ENCODE measurements at regions of chr12 and their contacts with region 1.

Region 1: DNA sequence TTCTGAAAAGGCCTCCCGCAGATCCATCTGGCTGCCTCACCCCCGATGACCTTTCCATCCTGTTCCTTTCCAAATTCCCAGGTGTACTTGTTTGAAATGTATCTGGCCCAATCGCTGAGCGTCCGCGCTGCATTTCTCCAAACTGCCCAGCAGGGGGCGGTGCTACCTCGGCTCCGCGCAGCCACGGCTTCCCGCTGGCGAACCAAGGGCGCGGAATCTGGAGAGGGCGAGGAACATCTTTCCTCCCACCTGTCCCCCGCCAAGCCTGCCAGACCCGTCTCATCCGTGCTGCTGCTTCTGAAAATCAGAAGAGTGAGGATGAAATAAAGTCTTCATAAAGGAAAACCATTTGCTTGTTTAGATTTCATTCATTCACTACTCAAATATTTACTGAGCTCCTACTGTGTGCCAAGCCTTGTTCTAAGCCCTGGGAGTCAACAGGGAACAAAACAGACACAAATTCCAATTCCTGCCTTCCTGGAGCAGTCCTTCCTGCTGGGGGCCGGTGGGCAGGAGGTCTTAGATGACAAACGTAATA is 16.8 kb upstream of the MYL2 start:
- DNase-seq: peak; percentile 47 to 78
- H3K4me3 ChIP-seq: no peak overlapping the region
- H3K4me3 Mint-ChIP-seq: peak overlapping the region; percentile 55
- H3K27ac Mint-ChIP-seq: peak overlapping the region; percentile 31
- H3K4me1 ChIP-seq: peaks cover 19% of the 10 kb centered on the region
- H3K4me1 Mint-ChIP-seq: peaks cover 22% of the 10 kb centered on the region
- H3K27me3 ChIP-seq: no peaks in the 10 kb centered on the region
- H3K27me3 Mint-ChIP-seq: no peaks in the 10 kb centered on the region
- CTCF ChIP-seq: peak; percentile 81 to 96

Region 2: DNA sequence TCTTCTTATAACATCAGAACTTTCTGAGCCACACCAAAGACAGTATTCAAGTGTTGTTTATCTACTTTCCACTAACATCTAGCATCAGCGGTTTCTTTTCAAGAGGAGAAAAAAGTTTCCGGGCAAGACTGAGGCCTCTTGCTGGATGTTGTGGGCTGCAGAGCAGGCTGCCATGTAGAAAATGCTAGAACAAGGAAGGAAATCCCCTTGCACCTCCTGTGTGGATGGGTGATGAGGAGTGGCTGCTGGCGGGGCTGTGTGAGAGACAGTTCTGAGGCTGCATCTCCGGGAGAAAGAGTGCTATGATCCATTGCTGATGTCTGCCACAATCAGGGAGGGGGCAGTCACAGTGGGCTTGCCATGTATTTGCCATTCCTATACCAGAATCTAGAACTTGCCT is 156.7 kb before region 1 on chr12:
- CTCF ChIA-PET with region 1: no interaction called
- POLR2A ChIA-PET with region 1: no interaction called
- intact Hi-C with region 1: no loop called
- DNase-seq: no peak
- H3K4me3 ChIP-seq: no peak overlapping the region
- H3K4me3 Mint-ChIP-seq: no peak overlapping the region
- H3K27ac Mint-ChIP-seq: no peak overlapping the region
- H3K4me1 ChIP-seq: no peaks in the 10 kb centered on the region
- H3K4me1 Mint-ChIP-seq: no peaks in the 10 kb centered on the region
- H3K27me3 ChIP-seq: no peaks in the 10 kb centered on the region; the same call in 1 of the 2 replicates
- H3K27me3 Mint-ChIP-seq: peaks cover 11% of the 10 kb centered on the region
- CTCF ChIP-seq: no peak

Region 3: GRCh38 chr12:110901401-110901800 is 35.8 kb before region 1 on chr12:
- CTCF ChIA-PET with region 1: no interaction called
- POLR2A ChIA-PET with region 1: no interaction called
- intact Hi-C with region 1: loop called (anchors 1 kb)
- DNase-seq: peak; percentile 33 to 45
- H3K4me3 ChIP-seq: no peak overlapping the region
- H3K4me3 Mint-ChIP-seq: no peak overlapping the region
- H3K27ac Mint-ChIP-seq: no peak overlapping the region
- H3K4me1 ChIP-seq: peaks cover 12% of the 10 kb centered on the region
- H3K4me1 Mint-ChIP-seq: peaks cover 13% of the 10 kb centered on the region
- H3K27me3 ChIP-seq: no peaks in the 10 kb centered on the region
- H3K27me3 Mint-ChIP-seq: no peaks in the 10 kb centered on the region
- CTCF ChIP-seq: no peak

Region 4: GRCh38 chr12:111033281-111034082 is 96.3 kb after region 1 on chr12:
- CTCF ChIA-PET with region 1: no interaction called
- POLR2A ChIA-PET with region 1: no interaction called
- intact Hi-C with region 1: no loop called
- DNase-seq: no peak
- H3K4me3 ChIP-seq: no peak overlapping the region
- H3K4me3 Mint-ChIP-seq: no peak overlapping the region
- H3K27ac Mint-ChIP-seq: no peak overlapping the region
- H3K4me1 ChIP-seq: peaks cover 6% of the 10 kb centered on the region; the same call in 1 of the 2 replicates
- H3K4me1 Mint-ChIP-seq: peaks cover 15% of the 10 kb centered on the region
- H3K27me3 ChIP-seq: no peaks in the 10 kb centered on the region
- H3K27me3 Mint-ChIP-seq: peaks cover 26% of the 10 kb centered on the region
- CTCF ChIP-seq: no peak

Region 5: GRCh38 chr12:111298582-111299436 is 361.6 kb after region 1 on chr12:
- CTCF ChIA-PET with region 1: interaction called, 3 read pairs
- POLR2A ChIA-PET with region 1: no interaction called
- intact Hi-C with region 1: loop called (anchors 2 kb)
- DNase-seq: peak; percentile 55 to 72
- H3K4me3 ChIP-seq: no peak overlapping the region
- H3K4me3 Mint-ChIP-seq: no peak overlapping the region
- H3K27ac Mint-ChIP-seq: no peak overlapping the region
- H3K4me1 ChIP-seq: no peaks in the 10 kb centered on the region
- H3K4me1 Mint-ChIP-seq: no peaks in the 10 kb centered on the region
- H3K27me3 ChIP-seq: no peaks in the 10 kb centered on the region
- H3K27me3 Mint-ChIP-seq: no peaks in the 10 kb centered on the region
- CTCF ChIP-seq: peak; percentile 84 to 91

Measured in Caco-2 (cell line).